CD8-positive, alpha-beta T cell (primary cell): ENCODE measurements at regions of chr14 and their contacts with region 1.

Region 1: DNA sequence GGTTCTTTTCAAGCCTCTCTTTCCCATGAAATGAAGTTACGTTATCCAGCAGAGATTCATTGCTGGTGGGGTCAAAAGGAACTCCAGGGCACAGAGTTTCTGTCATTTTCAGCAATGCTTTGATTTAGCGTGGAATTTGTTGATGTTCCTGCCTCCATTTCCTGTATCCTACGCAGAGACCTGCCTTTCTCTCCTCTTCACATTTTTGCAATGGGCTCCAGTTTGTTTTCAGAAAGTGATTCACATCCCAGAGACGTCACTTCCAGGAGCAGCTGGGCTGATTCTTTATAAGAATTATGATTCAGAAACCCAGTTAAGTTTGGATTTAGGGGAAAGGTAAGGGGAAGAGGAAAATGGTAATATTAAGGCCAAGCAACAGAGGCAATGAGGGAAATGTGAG is 11.6 kb downstream of the RNASE10 start:
- DNase-seq: no peak
- ATAC-seq: no peak
- H3K4me3 ChIP-seq: no peak overlapping the region
- H3K4me3 Mint-ChIP-seq: no peak overlapping the region
- H3K27ac ChIP-seq: no peak overlapping the region
- H3K27ac Mint-ChIP-seq: no peak overlapping the region
- H3K4me1 ChIP-seq: no peaks in the 10 kb centered on the region
- H3K4me1 Mint-ChIP-seq: no peaks in the 10 kb centered on the region
- H3K27me3 ChIP-seq: no peaks in the 10 kb centered on the region
- H3K27me3 Mint-ChIP-seq: no peaks in the 10 kb centered on the region
- CTCF ChIP-seq: no peak

Region 2: DNA sequence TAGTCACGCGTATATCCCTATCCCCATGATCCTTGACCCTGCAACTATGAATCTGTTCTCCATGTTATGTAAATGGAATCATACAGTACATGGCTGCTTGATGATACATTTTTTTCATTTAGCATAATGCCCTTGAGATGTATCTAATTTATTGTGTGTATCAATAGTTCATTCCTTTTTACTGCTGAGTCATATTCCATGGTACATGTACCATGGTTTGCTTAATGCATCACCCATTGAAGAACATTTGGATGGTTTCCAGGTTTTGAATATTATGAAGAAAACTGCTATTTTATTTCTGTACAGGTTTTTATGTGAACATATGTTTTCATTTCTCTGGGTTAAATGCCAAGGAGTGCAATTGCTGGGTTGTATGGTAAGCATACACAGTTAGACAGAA is 15.6 kb before region 1 on chr14:
- CTCF ChIA-PET with region 1: no interaction called
- POLR2A ChIA-PET with region 1: no interaction called
- intact Hi-C with region 1: loop called in 1 of 2 experiments (anchors 2 kb)
- DNase-seq: no peak
- ATAC-seq: no peak
- H3K4me3 ChIP-seq: no peak overlapping the region
- H3K4me3 Mint-ChIP-seq: no peak overlapping the region
- H3K27ac ChIP-seq: no peak overlapping the region
- H3K27ac Mint-ChIP-seq: no peak overlapping the region
- H3K4me1 ChIP-seq: no peaks in the 10 kb centered on the region
- H3K4me1 Mint-ChIP-seq: peaks cover 5% of the 10 kb centered on the region
- H3K27me3 ChIP-seq: peaks cover 0 to 3% of the 10 kb centered on the region in 2 experiments
- H3K27me3 Mint-ChIP-seq: no peaks in the 10 kb centered on the region
- CTCF ChIP-seq: no peak

Region 3: GRCh38 chr14:20530771-20531571 is 14.1 kb after region 1 on chr14:
- CTCF ChIA-PET with region 1: interaction called, 11 read pairs
- POLR2A ChIA-PET with region 1: no interaction called
- intact Hi-C with region 1: no loop called
- DNase-seq: peak; percentile 37 to 83 (median 72)
- ATAC-seq: peak; percentile 76
- H3K4me3 ChIP-seq: no peak overlapping the region
- H3K4me3 Mint-ChIP-seq: peak overlapping the region; percentile 48
- H3K27ac ChIP-seq: no peak overlapping the region
- H3K27ac Mint-ChIP-seq: no peak overlapping the region
- H3K4me1 ChIP-seq: no peaks in the 10 kb centered on the region
- H3K4me1 Mint-ChIP-seq: peaks cover 7% of the 10 kb centered on the region
- H3K27me3 ChIP-seq: peaks cover 0 to 2% of the 10 kb centered on the region in 2 experiments
- H3K27me3 Mint-ChIP-seq: peaks cover 8% of the 10 kb centered on the region
- CTCF ChIP-seq: peak; percentile 79

Region 4: GRCh38 chr14:20559461-20559904 is 42.6 kb after region 1 on chr14:
- CTCF ChIA-PET with region 1: no interaction called
- POLR2A ChIA-PET with region 1: no interaction called
- intact Hi-C with region 1: no loop called
- DNase-seq: no peak
- ATAC-seq: no peak
- H3K4me3 ChIP-seq: no peak overlapping the region
- H3K4me3 Mint-ChIP-seq: no peak overlapping the region
- H3K27ac ChIP-seq: no peak overlapping the region
- H3K27ac Mint-ChIP-seq: no peak overlapping the region
- H3K4me1 ChIP-seq: no peaks in the 10 kb centered on the region
- H3K4me1 Mint-ChIP-seq: no peaks in the 10 kb centered on the region
- H3K27me3 ChIP-seq: peaks cover 0 to 2% of the 10 kb centered on the region in 2 experiments
- H3K27me3 Mint-ChIP-seq: peaks cover 3% of the 10 kb centered on the region
- CTCF ChIP-seq: no peak